PC-3 (cell line): ENCODE measurements at regions of chr11 and their contacts with region 1.

Region 1: GRCh38 chr11:43738590-43739409 is 58.3 kb downstream of the HSD17B12 start:
- DNase-seq: peak; percentile 85
- ATAC-seq: peak; percentile 59
- H3K4me3 ChIP-seq: peak overlapping the region; percentile 54
- H3K27ac ChIP-seq: peak overlapping the region; percentile 85
- H3K4me1 ChIP-seq: peaks cover 47% of the 10 kb centered on the region
- H3K27me3 ChIP-seq: no peaks in the 10 kb centered on the region
- CTCF ChIP-seq: no peak

Region 2: GRCh38 chr11:43579171-43579918 is 159.5 kb before region 1 on chr11:
- CTCF ChIA-PET with region 1: no interaction called
- POLR2A ChIA-PET with region 1: no interaction called
- intact Hi-C with region 1: loop called (anchors 5 kb)
- DNase-seq: peak; percentile 59
- ATAC-seq: peak; percentile 75
- H3K4me3 ChIP-seq: peak overlapping the region; percentile 77
- H3K27ac ChIP-seq: no peak overlapping the region
- H3K4me1 ChIP-seq: no peaks in the 10 kb centered on the region; the same call in 1 of the 2 replicates
- H3K27me3 ChIP-seq: peaks cover 52% of the 10 kb centered on the region
- CTCF ChIP-seq: peak; percentile 29

Region 3: DNA sequence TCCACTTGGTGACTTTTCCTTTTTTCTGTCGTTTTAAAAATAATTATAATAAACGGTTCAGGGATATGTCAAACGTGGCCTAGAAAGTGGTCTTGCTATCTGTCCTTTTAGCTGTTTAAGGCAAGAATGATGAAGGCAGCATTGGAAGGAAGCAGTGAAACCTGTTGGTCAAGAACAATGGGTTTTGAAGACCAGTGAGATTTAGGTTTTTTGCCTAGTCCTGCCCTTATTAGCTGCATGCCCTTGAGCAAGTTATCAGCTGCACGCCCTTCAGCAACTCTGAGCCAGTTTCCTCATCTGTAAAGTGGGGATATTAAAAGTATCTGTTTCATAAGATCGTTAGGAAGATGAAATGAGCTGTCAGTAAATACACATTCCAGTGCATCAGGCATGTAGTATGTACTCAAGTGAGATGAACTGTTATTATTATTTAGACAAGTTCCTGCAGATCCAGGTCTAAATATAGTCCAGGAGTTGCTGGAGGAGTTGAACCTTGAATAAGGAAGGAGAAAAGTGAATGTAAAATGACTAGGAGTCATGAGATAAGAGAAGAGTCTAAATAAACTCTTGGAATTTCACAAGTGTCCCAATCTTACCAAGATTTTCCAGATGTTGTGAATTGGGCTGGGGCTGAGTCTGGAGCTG is 149.1 kb before region 1 on chr11:
- CTCF ChIA-PET with region 1: no interaction called
- POLR2A ChIA-PET with region 1: no interaction called
- intact Hi-C with region 1: no loop called
- DNase-seq: no peak
- ATAC-seq: no peak
- H3K4me3 ChIP-seq: no peak overlapping the region
- H3K27ac ChIP-seq: no peak overlapping the region
- H3K4me1 ChIP-seq: no peaks in the 10 kb centered on the region
- H3K27me3 ChIP-seq: peaks cover 24% of the 10 kb centered on the region
- CTCF ChIP-seq: no peak

Region 4: DNA sequence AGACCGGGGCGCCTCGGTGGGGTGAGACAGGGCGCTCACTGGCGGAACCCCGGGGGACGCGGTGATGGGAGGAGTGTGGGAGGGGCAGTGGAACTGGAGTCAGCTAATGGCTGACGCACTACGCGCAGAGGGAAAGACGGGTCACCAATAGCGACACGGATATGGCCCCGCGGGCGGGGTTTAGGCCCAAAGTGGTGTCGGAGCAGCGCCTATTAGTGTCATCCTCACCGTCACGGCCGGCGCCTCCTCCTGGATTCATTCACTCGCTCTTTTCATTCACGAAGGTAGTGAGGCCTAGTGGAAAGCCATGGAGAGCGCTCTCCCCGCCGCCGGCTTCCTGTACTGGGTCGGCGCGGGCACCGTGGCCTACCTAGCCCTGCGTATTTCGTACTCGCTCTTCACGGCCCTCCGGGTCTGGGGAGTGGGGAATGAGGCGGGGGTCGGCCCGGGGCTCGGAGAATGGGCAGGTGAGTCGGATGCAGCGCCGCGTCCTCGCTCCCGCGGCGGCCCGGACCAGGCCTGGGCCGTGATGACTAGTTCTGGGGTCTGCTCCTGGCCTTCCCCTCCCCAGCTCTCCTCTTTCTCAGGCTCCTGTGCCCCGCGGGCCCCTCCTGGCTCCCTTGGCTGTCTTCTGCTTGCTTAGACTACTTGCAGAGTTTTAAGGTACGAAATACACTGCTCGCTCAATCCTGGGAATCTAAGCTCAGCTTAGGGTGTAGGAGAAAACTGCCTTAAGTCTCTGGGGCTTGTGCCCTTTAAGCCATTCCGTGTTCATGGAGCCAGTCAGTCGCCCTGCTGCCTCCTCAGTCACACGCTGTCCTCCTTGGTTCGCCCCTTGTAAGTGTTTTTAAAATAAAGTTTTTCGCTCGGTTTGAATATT is 58.0 kb before region 1 on chr11 and contains the start of gene HSD17B12:
- CTCF ChIA-PET with region 1: interaction called, 3 read pairs
- POLR2A ChIA-PET with region 1: interaction called, 3 read pairs
- intact Hi-C with region 1: loop called (anchors 2 kb)
- DNase-seq: peak; percentile 99
- ATAC-seq: peak; percentile 96
- H3K4me3 ChIP-seq: peak within 1 kb of the TSS; percentile 98
- H3K27ac ChIP-seq: peak within 1 kb of the TSS; percentile 76
- H3K4me1 ChIP-seq: peaks cover 17% of the 10 kb centered on the region
- H3K27me3 ChIP-seq: no peaks in the 10 kb centered on the region
- CTCF ChIP-seq: no peak
- total RNA-seq, gene HSD17B12: 77.6 and 102 TPM in 2 replicates

Region 5: DNA sequence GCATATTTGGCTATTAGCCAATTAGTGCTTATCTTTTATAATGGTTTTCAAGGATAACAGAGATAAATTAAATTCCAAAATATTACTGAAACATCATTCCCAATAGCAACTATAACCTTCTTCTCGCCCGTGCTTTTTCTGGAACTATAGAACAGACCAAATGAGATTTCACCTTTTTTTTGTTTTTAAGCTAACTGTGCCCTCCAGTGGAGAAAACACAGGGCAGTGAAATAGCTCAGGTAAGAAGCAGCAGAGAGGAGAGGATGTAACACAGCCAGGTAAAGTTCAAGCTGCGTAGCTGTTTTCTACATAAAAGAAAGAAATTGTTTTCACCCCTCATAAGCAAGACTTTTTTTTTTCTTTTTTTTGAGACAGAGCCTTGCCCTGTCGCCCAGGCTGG is 30.0 kb before region 1 on chr11:
- CTCF ChIA-PET with region 1: no interaction called
- POLR2A ChIA-PET with region 1: no interaction called
- intact Hi-C with region 1: loop called (anchors 2 kb)
- DNase-seq: peak; percentile 10
- ATAC-seq: no peak
- H3K4me3 ChIP-seq: no peak overlapping the region
- H3K27ac ChIP-seq: no peak overlapping the region
- H3K4me1 ChIP-seq: peaks cover 4% of the 10 kb centered on the region; the same call in 1 of the 2 replicates
- H3K27me3 ChIP-seq: no peaks in the 10 kb centered on the region
- CTCF ChIP-seq: peak; percentile 42; the same call in 1 of the 2 replicates

Region 6: DNA sequence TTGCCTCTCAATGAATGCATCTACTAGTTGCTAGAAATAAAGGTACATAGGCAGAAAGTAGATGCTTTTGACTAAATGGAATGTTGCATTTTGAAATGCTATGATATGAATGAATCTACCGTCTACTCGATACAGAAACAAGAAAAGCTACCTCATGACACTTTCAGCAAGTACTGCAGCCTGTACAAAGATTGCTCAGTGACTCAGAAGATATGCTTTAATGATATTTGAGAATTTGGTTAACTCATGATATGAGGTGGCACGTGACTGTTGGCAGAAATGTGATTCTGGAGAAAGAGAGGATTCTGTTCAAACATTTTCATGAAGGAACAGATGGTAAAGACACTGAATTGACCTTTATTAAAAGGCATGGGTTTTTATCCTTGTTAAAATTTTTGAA is 17.8 kb after region 1 on chr11:
- CTCF ChIA-PET with region 1: interaction called, 3 read pairs
- POLR2A ChIA-PET with region 1: interaction called, 11 read pairs
- intact Hi-C with region 1: no loop called
- DNase-seq: peak; percentile 43
- ATAC-seq: peak; percentile 94
- H3K4me3 ChIP-seq: no peak overlapping the region
- H3K27ac ChIP-seq: no peak overlapping the region
- H3K4me1 ChIP-seq: peaks cover 9% of the 10 kb centered on the region
- H3K27me3 ChIP-seq: no peaks in the 10 kb centered on the region
- CTCF ChIP-seq: no peak

Region 7: GRCh38 chr11:43810929-43811596 is 72.3 kb after region 1 on chr11:
- CTCF ChIA-PET with region 1: no interaction called
- POLR2A ChIA-PET with region 1: no interaction called
- intact Hi-C with region 1: loop called (anchors 1 kb)
- DNase-seq: peak; percentile 34
- ATAC-seq: peak; percentile 35; the same call in 1 of the 2 replicates
- H3K4me3 ChIP-seq: no peak overlapping the region
- H3K27ac ChIP-seq: no peak overlapping the region
- H3K4me1 ChIP-seq: no peaks in the 10 kb centered on the region
- H3K27me3 ChIP-seq: no peaks in the 10 kb centered on the region
- CTCF ChIP-seq: peak; percentile 64